ENCODE measurements at regions of chr1 and their contacts with region 1.

Region 1: DNA sequence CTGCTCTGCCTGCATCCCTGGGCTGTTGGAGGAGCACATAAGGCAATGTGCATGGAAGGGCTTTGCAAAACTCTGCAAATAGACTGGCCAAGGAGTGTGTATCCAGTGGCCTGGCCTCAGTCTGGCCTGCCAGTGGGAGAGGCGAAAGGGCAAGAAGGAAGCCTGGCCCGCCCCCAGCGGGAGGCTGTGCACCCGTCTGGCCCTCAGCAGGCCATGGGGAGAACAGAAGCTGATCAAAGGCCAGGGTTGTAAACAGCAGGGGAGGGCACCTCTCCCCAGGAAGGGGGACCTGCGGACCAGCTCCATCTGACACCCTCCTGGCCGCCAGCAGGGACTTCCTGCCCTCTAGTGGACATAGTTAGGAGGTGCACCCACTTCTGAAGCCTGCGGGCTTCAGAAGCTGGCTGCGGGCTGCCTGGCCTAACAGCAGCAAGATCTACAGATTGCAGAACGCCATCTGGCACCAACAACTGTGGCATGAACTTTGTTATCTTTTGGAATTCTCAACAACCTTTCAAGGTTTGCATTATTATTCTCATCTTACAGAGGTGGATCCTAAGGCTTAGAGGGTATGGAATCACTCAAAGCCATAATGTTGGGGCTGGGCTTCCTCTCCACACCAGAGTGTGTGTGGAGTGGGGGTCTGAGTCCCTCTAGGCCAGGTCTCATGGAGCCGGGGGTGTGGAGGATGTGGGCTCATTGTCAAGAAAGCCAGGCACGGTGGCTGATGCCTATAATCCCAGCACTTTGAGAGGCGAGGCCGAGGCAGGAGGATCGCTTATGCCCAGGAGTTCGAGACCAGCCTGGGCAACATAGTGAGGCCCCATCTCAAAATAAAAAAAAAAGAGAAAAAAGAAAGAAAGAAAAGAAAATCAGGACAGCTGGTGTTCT is 18.9 kb upstream of the CDK18 start:
- DNase-seq: peak; percentile 70 to 72 (median 71)
- H3K4me3 ChIP-seq: no peak overlapping the region
- H3K4me3 Mint-ChIP-seq: peak overlapping the region in 1 of 8 donors; percentile 13
- H3K27ac ChIP-seq: no peak overlapping the region
- H3K27ac Mint-ChIP-seq: peak overlapping the region in 3 of 7 donors; percentile 23 to 78 (median 73)
- H3K4me1 ChIP-seq: peaks cover 17% of the 10 kb centered on the region
- H3K4me1 Mint-ChIP-seq: peaks cover 16 to 46% (median 25%) of the 10 kb centered on the region in 4 donors
- H3K27me3 ChIP-seq: peaks cover 3% of the 10 kb centered on the region
- H3K27me3 Mint-ChIP-seq: peaks cover 26 to 28% of the 10 kb centered on the region in 2 donors

Region 2: DNA sequence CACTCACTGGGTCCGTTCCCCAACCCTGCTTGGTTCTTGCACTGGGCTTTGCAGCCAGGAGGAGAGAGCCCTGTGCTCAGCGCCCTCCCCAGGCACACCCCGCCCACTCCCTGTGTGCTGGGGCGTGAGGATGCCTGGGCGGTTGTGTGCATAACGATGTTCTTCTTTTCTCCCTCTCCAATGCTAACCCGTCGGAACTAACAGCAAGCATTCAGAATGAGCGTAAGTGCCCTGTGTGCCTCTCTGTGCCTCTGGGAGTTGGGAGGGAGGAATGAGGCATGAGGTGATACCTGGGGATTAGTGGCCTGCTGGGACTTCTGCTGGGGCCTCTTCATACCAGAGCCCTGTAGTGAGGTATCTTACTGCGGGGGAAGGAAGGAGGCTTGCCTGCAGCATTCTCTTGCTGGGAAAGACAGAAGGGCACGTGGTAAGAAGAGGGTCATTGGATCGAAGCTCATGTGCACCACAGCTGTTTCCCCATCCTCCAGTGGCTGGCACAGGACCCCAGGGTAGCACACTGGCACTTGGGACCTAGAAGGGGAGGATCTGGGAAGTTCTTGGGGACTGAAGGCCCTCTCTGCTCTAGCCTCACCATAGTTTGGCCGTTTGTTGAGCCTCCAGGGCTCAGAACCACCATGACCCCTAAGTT is 535.1 kb before region 1 on chr1:
- CTCF ChIA-PET with region 1: no interaction called
- POLR2A ChIA-PET with region 1: no interaction called
- intact Hi-C with region 1: no loop called
- DNase-seq: no peak
- H3K4me3 ChIP-seq: no peak overlapping the region
- H3K4me3 Mint-ChIP-seq: no peak overlapping the region
- H3K27ac ChIP-seq: no peak overlapping the region
- H3K27ac Mint-ChIP-seq: no peak overlapping the region
- H3K4me1 ChIP-seq: no peaks in the 10 kb centered on the region
- H3K4me1 Mint-ChIP-seq: peaks cover 0 to 1% (median 0%) of the 10 kb centered on the region in 4 donors
- H3K27me3 ChIP-seq: no peaks in the 10 kb centered on the region
- H3K27me3 Mint-ChIP-seq: peaks cover 11 to 14% of the 10 kb centered on the region in 2 donors

Region 3: GRCh38 chr1:205273551-205273982 is 212.0 kb before region 1 on chr1:
- CTCF ChIA-PET with region 1: interaction called, 26 read pairs
- POLR2A ChIA-PET with region 1: interaction called, 3 read pairs
- intact Hi-C with region 1: loop called (anchors 1 kb)
- DNase-seq: peak; percentile 80 to 84 (median 83)
- H3K4me3 ChIP-seq: peak overlapping the region in 1 of 2 donors; percentile 2
- H3K4me3 Mint-ChIP-seq: peak overlapping the region in 6 of 8 donors; percentile 34 to 72 (median 68)
- H3K27ac ChIP-seq: no peak overlapping the region
- H3K27ac Mint-ChIP-seq: peak overlapping the region in 5 of 7 donors; percentile 10 to 75 (median 55)
- H3K4me1 ChIP-seq: peaks cover 46% of the 10 kb centered on the region
- H3K4me1 Mint-ChIP-seq: peaks cover 21 to 46% (median 32%) of the 10 kb centered on the region in 4 donors
- H3K27me3 ChIP-seq: no peaks in the 10 kb centered on the region
- H3K27me3 Mint-ChIP-seq: no peaks in the 10 kb centered on the region

Region 4: DNA sequence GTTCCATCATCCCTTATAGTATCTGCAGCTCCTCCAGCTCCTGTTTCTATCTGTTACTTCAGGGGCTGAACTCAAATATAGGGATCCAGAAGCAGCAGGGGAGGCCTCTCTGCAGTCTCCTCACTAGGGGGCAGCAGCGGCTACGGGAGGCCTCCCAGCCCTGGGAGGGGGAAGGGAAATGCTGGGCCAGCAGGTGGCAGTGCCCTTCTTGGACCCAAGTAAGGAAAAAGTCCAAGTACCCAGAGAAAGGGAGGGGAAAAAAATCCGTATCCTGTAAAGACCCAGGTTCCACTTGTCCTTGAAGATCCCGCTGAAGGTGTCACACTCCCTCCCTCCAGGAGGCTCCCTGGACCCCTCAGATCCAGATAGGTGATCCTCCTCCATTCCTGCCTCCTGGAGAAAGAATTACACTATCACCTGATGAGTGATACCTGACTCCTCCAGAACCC is 149.9 kb before region 1 on chr1:
- CTCF ChIA-PET with region 1: interaction called, 55 read pairs
- POLR2A ChIA-PET with region 1: no interaction called
- intact Hi-C with region 1: loop called (anchors 1 kb)
- DNase-seq: peak; percentile 68 to 72 (median 70)
- H3K4me3 ChIP-seq: no peak overlapping the region
- H3K4me3 Mint-ChIP-seq: no peak overlapping the region
- H3K27ac ChIP-seq: no peak overlapping the region
- H3K27ac Mint-ChIP-seq: no peak overlapping the region
- H3K4me1 ChIP-seq: no peaks in the 10 kb centered on the region
- H3K4me1 Mint-ChIP-seq: peaks cover 0 to 2% (median 0%) of the 10 kb centered on the region in 4 donors
- H3K27me3 ChIP-seq: no peaks in the 10 kb centered on the region
- H3K27me3 Mint-ChIP-seq: peaks cover 0 to 2% of the 10 kb centered on the region in 2 donors

Region 5: GRCh38 chr1:205365945-205366463 is 119.6 kb before region 1 on chr1:
- CTCF ChIA-PET with region 1: interaction called, 11 read pairs
- POLR2A ChIA-PET with region 1: no interaction called
- intact Hi-C with region 1: no loop called
- DNase-seq: no peak
- H3K4me3 ChIP-seq: no peak overlapping the region
- H3K4me3 Mint-ChIP-seq: no peak overlapping the region
- H3K27ac ChIP-seq: no peak overlapping the region
- H3K27ac Mint-ChIP-seq: no peak overlapping the region
- H3K4me1 ChIP-seq: no peaks in the 10 kb centered on the region
- H3K4me1 Mint-ChIP-seq: no peaks in the 10 kb centered on the region
- H3K27me3 ChIP-seq: no peaks in the 10 kb centered on the region
- H3K27me3 Mint-ChIP-seq: peaks cover 0 to 8% of the 10 kb centered on the region in 2 donors

Region 6: GRCh38 chr1:205396967-205397616 is 88.5 kb before region 1 on chr1:
- CTCF ChIA-PET with region 1: interaction called, 152 read pairs
- POLR2A ChIA-PET with region 1: interaction called, 15 read pairs
- intact Hi-C with region 1: loop called (anchors 1 kb)
- DNase-seq: peak in 4 of 5 donors; percentile 38 to 46 (median 42)
- H3K4me3 ChIP-seq: no peak overlapping the region
- H3K4me3 Mint-ChIP-seq: no peak overlapping the region
- H3K27ac ChIP-seq: no peak overlapping the region
- H3K27ac Mint-ChIP-seq: peak overlapping the region in 1 of 7 donors; percentile 14
- H3K4me1 ChIP-seq: no peaks in the 10 kb centered on the region
- H3K4me1 Mint-ChIP-seq: peaks cover 2 to 9% (median 5%) of the 10 kb centered on the region in 4 donors
- H3K27me3 ChIP-seq: no peaks in the 10 kb centered on the region
- H3K27me3 Mint-ChIP-seq: peaks cover 2 to 10% of the 10 kb centered on the region in 2 donors

Region 7: GRCh38 chr1:205430696-205431305 is 54.8 kb before region 1 on chr1:
- CTCF ChIA-PET with region 1: interaction called, 21 read pairs
- POLR2A ChIA-PET with region 1: no interaction called
- intact Hi-C with region 1: no loop called
- DNase-seq: peak; percentile 46 to 69 (median 53)
- H3K4me3 ChIP-seq: peak overlapping the region; percentile 41 to 55
- H3K4me3 Mint-ChIP-seq: peak overlapping the region; percentile 81 to 91 (median 84)
- H3K27ac ChIP-seq: no peak overlapping the region
- H3K27ac Mint-ChIP-seq: peak overlapping the region in 5 of 7 donors; percentile 34 to 83 (median 59)
- H3K4me1 ChIP-seq: peaks cover 10% of the 10 kb centered on the region
- H3K4me1 Mint-ChIP-seq: peaks cover 8 to 17% (median 13%) of the 10 kb centered on the region in 4 donors
- H3K27me3 ChIP-seq: no peaks in the 10 kb centered on the region
- H3K27me3 Mint-ChIP-seq: peaks cover 10 to 11% of the 10 kb centered on the region in 2 donors

Region 8: DNA sequence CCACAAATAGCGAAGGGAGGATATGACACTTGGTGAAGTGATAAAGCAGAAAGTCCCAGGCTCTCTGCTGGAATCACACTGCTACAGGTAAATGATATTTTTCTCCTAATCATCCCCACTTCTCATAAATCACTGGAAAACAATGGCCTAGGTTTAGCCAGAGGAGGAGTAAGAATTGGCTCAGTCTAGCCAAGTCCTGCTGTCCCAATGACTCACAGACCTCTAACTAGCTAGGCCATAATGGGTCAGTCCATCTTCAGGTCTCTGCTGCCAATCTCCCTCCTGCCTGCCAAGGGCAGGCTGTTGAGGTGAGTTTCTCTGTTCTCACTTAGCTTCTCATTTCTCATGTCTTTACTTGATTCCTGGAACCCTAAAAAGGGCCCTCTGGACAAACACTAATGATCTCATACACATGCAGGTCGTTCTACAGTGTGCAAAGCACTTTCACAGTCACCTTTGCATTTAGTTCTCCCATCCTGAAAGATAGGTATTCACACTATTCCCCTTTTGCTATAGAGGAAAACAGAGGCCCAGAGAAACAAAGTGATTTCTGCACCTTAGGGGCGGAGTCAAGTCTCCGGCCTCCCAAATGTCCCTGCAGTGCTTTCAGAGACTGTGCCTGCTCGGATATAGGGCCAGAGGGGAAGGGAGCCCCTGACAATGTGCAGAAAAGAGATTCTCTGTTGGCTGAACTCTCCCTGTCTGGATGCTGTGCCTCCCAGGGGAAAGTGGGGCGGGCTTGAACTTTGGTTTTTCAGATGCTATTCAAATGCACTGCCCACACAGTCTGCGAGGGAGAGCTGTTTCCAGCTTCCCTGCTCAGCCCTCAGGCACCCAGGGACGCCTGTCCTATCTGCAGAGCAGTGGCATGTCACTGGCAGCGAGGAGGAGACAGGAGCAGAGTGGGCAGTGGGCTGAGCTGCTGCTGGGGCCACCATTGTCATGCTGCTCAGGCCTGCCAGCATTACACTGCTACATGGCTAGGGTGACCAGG is 15.0 kb after region 1 on chr1:
- CTCF ChIA-PET with region 1: interaction called, 14 read pairs
- POLR2A ChIA-PET with region 1: no interaction called
- intact Hi-C with region 1: no loop called
- DNase-seq: no peak
- H3K4me3 ChIP-seq: no peak overlapping the region
- H3K4me3 Mint-ChIP-seq: no peak overlapping the region
- H3K27ac ChIP-seq: no peak overlapping the region
- H3K27ac Mint-ChIP-seq: no peak overlapping the region
- H3K4me1 ChIP-seq: peaks cover 9% of the 10 kb centered on the region
- H3K4me1 Mint-ChIP-seq: peaks cover 2 to 14% (median 8%) of the 10 kb centered on the region in 4 donors
- H3K27me3 ChIP-seq: no peaks in the 10 kb centered on the region
- H3K27me3 Mint-ChIP-seq: peaks cover 4% of the 10 kb centered on the region in 2 donors